ENCODE measurements at regions of chr3 and their contacts with region 1.

Region 1: DNA sequence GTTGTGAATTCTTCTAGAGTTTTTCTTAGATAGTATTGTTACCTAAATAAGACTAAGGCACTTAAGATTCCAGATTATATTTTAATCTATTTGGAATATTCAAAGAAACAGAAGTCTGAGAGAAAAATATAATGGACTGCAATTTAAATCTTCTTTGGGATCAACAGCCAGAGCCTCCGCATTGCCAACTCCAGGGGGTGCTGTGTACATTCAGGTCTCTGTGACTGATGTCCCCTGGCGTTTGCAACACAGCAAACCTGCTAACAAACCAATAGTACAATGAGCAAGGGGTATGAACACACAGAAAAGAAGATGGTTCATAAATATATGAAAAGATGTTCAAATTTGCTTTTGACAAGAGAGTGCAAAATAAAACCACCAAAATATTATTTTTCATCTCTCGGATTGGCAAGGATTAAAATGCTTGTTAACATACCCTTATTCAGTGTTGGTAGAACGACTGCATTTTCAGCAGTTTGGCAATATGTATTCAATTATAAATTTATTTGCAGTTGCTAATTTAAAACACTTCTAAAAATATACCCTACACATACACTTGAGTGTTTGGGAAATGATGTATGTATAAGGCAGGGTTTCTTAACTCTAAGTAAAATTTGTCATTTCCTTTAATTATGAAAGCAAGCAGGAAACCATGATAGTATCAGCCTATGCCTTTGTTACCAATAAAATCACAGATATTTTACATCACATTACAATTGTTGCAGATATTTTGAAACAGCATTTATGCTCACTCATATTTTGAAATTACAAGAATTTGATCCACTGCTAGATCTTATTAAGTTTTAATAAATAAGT is 16.1 kb upstream of the TM4SF1 start:
- DNase-seq: peak in 1 of 2 donors; percentile 82
- H3K4me3 ChIP-seq: no peak overlapping the region
- H3K27ac ChIP-seq: peak overlapping the region in 1 of 2 donors; percentile 8
- H3K4me1 ChIP-seq: peaks cover 0 to 14% of the 10 kb centered on the region in 2 donors
- H3K27me3 ChIP-seq: no peaks in the 10 kb centered on the region
- CTCF ChIP-seq: peak; percentile 75 to 84 (median 76)

Region 2: DNA sequence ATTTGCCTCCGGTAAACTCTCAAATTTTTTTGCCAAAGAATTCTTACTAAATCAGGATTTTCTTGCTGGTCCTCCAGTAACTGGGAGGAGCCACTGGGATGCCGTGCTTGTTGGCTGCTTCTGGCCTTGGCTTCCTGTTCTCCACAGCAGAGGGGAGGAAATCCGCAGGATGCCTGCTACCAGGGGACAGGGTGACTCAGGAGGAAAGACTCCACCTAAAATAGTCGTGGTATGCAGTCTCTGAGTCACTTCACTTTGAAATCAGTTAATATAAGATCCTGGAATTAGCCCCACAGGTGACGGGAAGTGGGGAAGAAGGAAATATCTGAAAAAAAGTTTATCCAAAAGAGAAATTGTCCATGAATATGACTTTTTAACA is 53.6 kb before region 1 on chr3:
- intact Hi-C with region 1: no loop called
- DNase-seq: peak; percentile 65 to 96
- H3K4me3 ChIP-seq: no peak overlapping the region
- H3K27ac ChIP-seq: peak overlapping the region; percentile 72 to 78
- H3K4me1 ChIP-seq: peaks cover 0 to 17% of the 10 kb centered on the region in 2 donors
- H3K27me3 ChIP-seq: no peaks in the 10 kb centered on the region
- CTCF ChIP-seq: no peak

Region 3: GRCh38 chr3:149352556-149352955 is 41.0 kb before region 1 on chr3:
- intact Hi-C with region 1: loop called (anchors 5 kb)
- DNase-seq: no peak
- H3K4me3 ChIP-seq: no peak overlapping the region
- H3K27ac ChIP-seq: no peak overlapping the region
- H3K4me1 ChIP-seq: peaks cover 0 to 3% of the 10 kb centered on the region in 2 donors
- H3K27me3 ChIP-seq: no peaks in the 10 kb centered on the region
- CTCF ChIP-seq: peak; percentile 63 to 76 (median 66)

Region 4: GRCh38 chr3:149512209-149512782 is 118.7 kb after region 1 on chr3:
- intact Hi-C with region 1: no loop called
- DNase-seq: peak in 1 of 2 donors; percentile 83
- H3K4me3 ChIP-seq: no peak overlapping the region
- H3K27ac ChIP-seq: no peak overlapping the region
- H3K4me1 ChIP-seq: peaks cover 1 to 20% of the 10 kb centered on the region in 2 donors
- H3K27me3 ChIP-seq: no peaks in the 10 kb centered on the region
- CTCF ChIP-seq: peak; percentile 66 to 85 (median 71)